ENCODE measurements at regions of chr15 and their contacts with region 1.

Region 1: DNA sequence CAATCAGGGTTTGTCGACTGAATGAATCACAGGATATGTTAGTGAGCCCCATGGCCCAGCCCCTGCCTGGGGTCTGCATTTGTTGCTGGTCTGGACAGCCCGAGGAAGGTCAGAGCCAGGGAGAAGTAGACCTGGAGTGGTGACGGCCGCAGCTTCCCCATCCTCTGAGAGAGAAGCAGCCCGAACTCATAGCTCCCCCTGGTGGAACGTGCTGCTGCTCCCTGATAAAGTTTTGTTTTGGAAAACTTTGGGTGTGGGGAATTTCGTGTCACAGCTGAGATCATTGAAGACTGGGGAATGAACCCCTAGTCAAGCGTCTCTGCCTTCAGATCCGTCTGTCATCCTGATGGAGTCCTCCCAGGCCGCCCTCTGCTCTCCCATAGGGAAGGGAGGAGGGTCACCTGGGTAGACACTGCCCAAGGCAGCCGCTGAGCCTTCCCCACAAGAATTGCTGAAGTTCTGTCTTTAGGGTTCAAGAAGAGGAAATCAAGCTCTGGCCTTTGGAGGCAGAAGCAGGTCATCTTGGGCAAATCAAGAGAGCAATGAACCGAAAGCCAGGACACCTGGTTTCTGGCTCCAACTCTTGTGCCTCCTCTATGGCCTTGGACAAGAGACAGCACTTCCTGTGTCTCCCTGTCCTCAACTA is 60.5 kb downstream of the GLDN start:
- DNase-seq: peak; percentile 76
- ATAC-seq: peak; percentile 79
- H3K4me3 Mint-ChIP-seq: no peak overlapping the region
- H3K27ac Mint-ChIP-seq: no peak overlapping the region
- H3K4me1 Mint-ChIP-seq: peaks cover 14% of the 10 kb centered on the region
- H3K27me3 Mint-ChIP-seq: peaks cover 3% of the 10 kb centered on the region; the same call in 1 of the 2 replicates
- CTCF ChIP-seq: peak; percentile 64

Region 2: DNA sequence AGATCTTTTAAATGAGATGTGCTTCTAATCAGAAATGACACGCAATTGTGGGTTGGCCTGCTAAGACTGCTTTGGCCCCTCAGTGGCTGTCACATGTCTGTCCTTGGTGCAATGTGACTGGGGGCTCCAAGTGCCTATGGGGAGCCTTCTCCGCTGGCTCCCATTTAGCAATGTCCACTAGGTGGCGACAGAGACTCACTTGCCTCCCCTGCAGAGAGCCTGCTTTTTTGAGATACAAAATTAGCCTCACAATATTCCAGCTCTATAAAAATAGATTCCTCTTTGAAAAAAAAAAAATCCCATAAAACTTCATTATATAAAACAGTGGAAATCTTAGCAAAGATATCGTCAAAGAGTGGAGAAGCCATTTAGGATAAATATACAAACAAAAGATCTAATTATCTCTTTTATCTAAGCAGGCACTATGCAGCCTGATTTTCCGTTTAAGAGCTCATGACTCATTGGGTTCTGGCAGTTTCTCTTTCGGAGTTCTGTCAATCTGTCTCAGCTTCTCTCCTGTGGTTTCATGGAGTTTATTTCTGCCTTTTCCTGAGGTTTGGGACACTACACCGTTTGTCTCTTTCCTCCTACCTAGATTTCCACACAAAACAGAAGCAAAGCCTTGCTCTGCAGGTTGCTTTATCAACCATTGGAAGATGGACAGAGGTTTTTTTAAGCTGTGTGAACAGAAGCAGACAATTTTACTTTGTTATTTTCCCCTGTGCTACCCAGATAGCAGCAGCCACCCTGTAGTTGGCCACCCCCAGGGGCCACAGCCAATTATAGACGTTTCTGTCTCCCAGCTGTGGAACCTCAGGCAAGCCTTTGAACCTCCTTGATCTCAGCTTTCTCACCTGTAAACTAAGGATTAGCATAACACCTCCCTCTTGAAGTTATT is 238.9 kb before region 1 on chr15:
- CTCF ChIA-PET with region 1: interaction called, 35 read pairs
- POLR2A ChIA-PET with region 1: no interaction called
- DNase-seq: peak; percentile 76
- ATAC-seq: peak; percentile 93
- H3K4me3 Mint-ChIP-seq: no peak overlapping the region
- H3K27ac Mint-ChIP-seq: no peak overlapping the region
- H3K4me1 Mint-ChIP-seq: peaks cover 11% of the 10 kb centered on the region
- H3K27me3 Mint-ChIP-seq: no peaks in the 10 kb centered on the region
- CTCF ChIP-seq: peak; percentile 91

Region 3: DNA sequence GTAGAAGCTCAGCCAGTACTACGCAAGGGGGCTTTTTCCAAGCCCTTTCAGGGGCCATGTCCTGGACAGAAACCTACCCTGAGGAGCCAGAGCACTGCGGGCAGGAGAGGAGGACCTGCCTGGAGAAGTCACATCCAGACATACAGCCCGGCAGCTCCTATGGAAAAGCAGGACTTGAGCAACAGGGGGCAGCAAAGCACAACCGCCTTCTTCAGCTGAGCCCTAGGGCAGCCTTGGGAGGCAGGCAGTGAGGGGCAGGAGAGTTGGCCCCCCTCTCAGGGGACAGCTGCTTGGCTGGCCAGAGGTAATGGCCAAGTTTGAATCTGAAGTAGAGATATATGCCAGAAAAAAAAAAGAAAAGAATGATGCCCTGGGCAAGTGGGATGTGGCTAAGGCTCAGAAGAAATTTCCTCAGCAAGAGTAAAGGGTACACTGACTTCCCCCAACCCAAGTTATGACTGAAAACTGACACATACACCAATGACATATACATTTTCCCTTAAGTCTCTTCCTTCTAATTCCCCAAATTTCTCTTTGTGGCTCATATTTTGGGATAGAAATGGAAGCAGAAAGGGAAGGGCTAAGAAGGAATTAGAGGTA is 120.5 kb before region 1 on chr15:
- CTCF ChIA-PET with region 1: interaction called, 15 read pairs
- POLR2A ChIA-PET with region 1: no interaction called
- DNase-seq: peak; percentile 80
- ATAC-seq: peak; percentile 99
- H3K4me3 Mint-ChIP-seq: no peak overlapping the region
- H3K27ac Mint-ChIP-seq: no peak overlapping the region
- H3K4me1 Mint-ChIP-seq: no peaks in the 10 kb centered on the region
- H3K27me3 Mint-ChIP-seq: no peaks in the 10 kb centered on the region; the same call in 1 of the 2 replicates
- CTCF ChIP-seq: peak; percentile 58

Region 4: DNA sequence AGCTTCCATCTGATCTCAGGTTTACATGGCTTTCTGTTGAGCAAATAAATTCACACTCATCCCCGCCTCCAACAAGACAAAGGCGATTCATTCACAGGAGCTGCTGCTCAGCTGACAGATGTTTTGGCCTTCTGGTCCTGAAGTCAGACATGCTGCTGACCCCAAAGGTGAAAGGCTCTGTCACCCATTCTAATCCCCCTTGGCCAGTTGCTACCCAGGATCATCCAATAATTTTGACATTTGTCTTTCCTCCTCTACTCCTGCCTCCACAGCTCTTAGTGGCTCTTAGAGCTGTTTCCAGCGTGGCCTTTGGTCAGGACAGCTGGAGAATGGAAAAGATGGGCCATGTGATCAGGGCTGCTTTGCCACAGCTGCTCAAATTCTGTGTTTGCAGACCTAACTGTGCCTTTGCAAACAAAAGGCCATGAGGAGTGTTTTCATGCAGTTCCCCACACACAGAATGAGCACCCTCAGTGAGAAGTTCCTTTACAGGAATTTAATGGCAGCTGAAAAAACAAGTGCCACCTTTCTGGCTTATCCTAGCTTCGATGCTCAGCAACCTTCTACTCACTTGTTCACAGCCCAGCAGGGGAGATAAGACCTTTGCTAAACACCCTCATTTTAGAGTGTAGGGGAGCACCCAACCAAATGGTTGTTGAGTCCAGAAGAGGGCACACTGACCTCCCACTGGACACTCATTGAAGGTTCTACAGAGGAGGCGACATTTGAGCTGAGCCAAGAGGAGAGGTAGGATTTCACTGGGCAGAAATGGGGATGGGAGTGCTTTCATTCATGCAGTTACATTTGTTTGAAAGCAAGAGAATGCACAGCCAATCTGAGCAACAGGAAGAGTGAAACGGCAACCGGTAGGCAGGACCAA is 102.6 kb before region 1 on chr15:
- CTCF ChIA-PET with region 1: interaction called, 14 read pairs
- POLR2A ChIA-PET with region 1: no interaction called
- DNase-seq: no peak
- ATAC-seq: no peak
- H3K4me3 Mint-ChIP-seq: no peak overlapping the region
- H3K27ac Mint-ChIP-seq: no peak overlapping the region
- H3K4me1 Mint-ChIP-seq: peaks cover 3% of the 10 kb centered on the region; the same call in 1 of the 2 replicates
- H3K27me3 Mint-ChIP-seq: peaks cover 14% of the 10 kb centered on the region
- CTCF ChIP-seq: no peak

Region 5: DNA sequence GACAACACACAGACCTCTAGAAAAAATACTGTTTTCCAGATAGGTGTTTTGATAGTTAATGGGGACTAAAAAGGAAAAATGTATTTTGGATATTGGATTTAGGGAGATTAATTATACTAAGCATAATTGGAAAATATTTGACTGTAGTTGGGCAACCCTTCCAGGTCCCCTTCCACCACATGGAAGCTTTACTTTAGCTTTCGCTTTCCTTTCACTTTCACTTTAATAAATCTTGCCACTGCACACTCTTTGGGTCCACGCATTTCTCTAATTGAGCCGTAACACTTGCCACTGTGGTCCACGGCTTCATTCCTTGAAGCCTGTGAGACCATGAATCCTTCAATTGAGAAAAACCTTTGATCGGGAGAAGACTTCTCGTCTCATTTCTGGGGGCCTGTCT is 45.0 kb before region 1 on chr15:
- CTCF ChIA-PET with region 1: no interaction called
- POLR2A ChIA-PET with region 1: no interaction called
- DNase-seq: no peak
- ATAC-seq: no peak
- H3K4me3 Mint-ChIP-seq: no peak overlapping the region
- H3K27ac Mint-ChIP-seq: no peak overlapping the region
- H3K4me1 Mint-ChIP-seq: peaks cover 4% of the 10 kb centered on the region; the same call in 1 of the 2 replicates
- H3K27me3 Mint-ChIP-seq: no peaks in the 10 kb centered on the region
- CTCF ChIP-seq: no peak

Region 6: GRCh38 chr15:51368751-51369450 is 33.1 kb before region 1 on chr15:
- CTCF ChIA-PET with region 1: interaction called, 10 read pairs
- POLR2A ChIA-PET with region 1: no interaction called
- DNase-seq: no peak
- ATAC-seq: no peak
- H3K4me3 Mint-ChIP-seq: no peak overlapping the region
- H3K27ac Mint-ChIP-seq: no peak overlapping the region
- H3K4me1 Mint-ChIP-seq: peaks cover 4% of the 10 kb centered on the region; the same call in 1 of the 2 replicates
- H3K27me3 Mint-ChIP-seq: no peaks in the 10 kb centered on the region
- CTCF ChIP-seq: no peak

Region 7: GRCh38 chr15:51390966-51391432 is 11.0 kb before region 1 on chr15:
- CTCF ChIA-PET with region 1: interaction called, 40 read pairs
- POLR2A ChIA-PET with region 1: no interaction called
- DNase-seq: peak; percentile 61
- ATAC-seq: peak; percentile 74
- H3K4me3 Mint-ChIP-seq: no peak overlapping the region
- H3K27ac Mint-ChIP-seq: peak overlapping the region; percentile 43
- H3K4me1 Mint-ChIP-seq: peaks cover 31% of the 10 kb centered on the region
- H3K27me3 Mint-ChIP-seq: no peaks in the 10 kb centered on the region
- CTCF ChIP-seq: no peak

Region 8: DNA sequence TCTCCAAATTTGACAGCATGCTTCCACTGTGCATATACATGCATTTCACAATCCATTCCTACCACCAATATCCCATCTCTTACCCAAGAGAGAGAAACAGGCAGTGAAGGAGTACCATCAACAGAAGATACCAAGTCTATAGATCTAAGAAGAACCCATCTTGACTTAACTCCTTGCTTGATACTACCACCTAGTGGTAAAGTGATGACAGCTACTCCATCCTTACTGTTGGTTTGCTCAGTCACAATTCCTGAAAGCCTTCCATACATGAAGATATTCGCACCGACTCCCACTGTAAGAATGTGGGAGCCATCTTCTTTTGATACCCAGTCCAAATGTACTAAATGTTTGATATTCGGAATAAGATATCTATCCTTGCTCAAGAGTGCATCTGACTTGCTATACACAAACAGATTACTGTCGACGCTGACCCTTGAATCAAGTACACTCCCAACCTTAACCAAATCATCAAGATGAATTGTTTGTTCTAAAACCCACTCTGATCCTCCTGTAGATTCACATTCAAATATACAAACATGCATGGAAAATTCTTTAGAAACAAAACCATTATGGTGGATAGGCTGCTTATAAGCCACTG is 97.5 kb after region 1 on chr15:
- CTCF ChIA-PET with region 1: interaction called, 13 read pairs
- POLR2A ChIA-PET with region 1: interaction called, 5 read pairs
- DNase-seq: no peak
- ATAC-seq: peak; percentile 93
- H3K4me3 Mint-ChIP-seq: no peak overlapping the region
- H3K27ac Mint-ChIP-seq: no peak overlapping the region
- H3K4me1 Mint-ChIP-seq: no peaks in the 10 kb centered on the region
- H3K27me3 Mint-ChIP-seq: no peaks in the 10 kb centered on the region
- CTCF ChIP-seq: 0 out of 2 replicates have a peak, but pooled peaks have one; percentile 48

Measured in WTC11 (cell line).